Activated T-helper 2 cell treated with anti-CD3 and anti-CD28 coated beads, Interferon-gamma antibody, Interleukin-2, Interleukin-4, amounts not matched to agents 10 μg/mL and 5 μg/mL and 100 μg/mL, durations not matched to agents 14 hours and 24 hours and 36 hours (primary cell): ENCODE measurements at regions of chr1 and their contacts with region 1.

Region 1: DNA sequence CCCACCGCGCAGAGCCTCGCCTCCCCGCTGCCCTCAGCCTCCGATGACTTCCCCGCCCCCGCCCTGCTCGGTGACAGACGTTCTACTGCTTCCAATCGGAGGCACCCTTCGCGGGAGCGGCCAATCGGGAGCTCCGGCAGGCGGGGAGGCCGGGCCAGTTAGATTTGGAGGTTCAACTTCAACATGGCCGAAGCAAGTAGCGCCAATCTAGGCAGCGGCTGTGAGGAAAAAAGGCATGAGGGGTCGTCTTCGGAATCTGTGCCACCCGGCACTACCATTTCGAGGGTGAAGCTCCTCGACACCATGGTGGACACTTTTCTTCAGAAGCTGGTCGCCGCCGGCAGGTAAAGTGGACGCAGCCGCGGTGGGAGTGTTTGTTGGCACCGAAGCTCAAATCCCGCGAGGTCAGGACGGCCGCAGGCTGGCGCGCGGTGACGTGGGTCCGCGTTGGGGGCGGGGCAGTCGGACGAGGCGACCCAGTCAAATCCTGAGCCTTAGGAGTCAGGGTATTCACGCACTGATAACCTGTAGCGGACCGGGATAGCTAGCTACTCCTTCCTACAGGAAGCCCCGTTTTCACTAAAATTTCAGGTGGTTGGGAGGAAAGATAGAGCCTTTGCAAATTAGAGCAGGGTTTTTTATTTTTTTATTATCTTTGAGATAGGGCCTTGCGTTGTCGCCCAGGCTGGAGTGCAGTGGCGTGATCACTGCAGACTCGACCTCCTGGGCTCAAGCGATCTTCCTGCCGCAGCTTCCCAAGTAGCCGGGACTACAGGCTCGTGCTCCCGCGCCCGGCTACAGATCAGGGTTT is at the start of gene PMF1:
- DNase-seq: peak; percentile 95
- H3K4me3 Mint-ChIP-seq: peak within 1 kb of the TSS; percentile 93
- H3K27ac Mint-ChIP-seq: peak within 1 kb of the TSS; percentile 98
- H3K4me1 Mint-ChIP-seq: peaks cover 31% of the 10 kb centered on the region
- H3K27me3 Mint-ChIP-seq: no peaks in the 10 kb centered on the region
- total RNA-seq, gene PMF1: 115 and 117 TPM in 2 replicates

Region 2: GRCh38 chr1:156198831-156199349 is 14.1 kb before region 1 on chr1:
- intact Hi-C with region 1: loop called (anchors 1 kb)
- DNase-seq: no peak
- H3K4me3 Mint-ChIP-seq: peak overlapping the region; percentile 76
- H3K27ac Mint-ChIP-seq: peak overlapping the region; percentile 95
- H3K4me1 Mint-ChIP-seq: peaks cover 55% of the 10 kb centered on the region
- H3K27me3 Mint-ChIP-seq: no peaks in the 10 kb centered on the region

Region 3: DNA sequence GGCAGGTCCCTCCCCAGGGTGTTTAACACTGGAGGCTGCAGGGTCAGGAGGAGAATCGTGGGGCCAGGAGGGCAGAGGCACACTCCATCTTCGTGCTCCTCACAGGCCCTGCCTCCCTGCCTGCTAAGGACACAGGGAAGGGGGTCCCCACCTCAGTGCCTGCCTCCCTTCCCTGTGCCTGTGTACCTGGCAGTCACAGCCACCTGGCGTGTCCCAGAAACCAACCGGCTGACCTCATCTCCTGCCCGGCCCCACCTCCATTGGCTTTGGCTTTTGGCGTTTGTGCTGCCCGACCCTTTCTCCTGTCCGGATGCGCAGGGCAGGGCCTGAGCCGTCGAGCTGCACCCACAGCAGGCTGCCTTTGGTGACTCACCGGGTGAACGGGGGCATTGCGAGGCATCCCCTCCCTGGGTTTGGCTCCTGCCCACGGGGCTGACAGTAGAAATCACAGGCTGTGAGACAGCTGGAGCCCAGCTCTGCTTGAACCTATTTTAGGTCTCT is 28.3 kb after region 1 on chr1:
- intact Hi-C with region 1: no loop called
- DNase-seq: no peak
- H3K4me3 Mint-ChIP-seq: no peak overlapping the region
- H3K27ac Mint-ChIP-seq: no peak overlapping the region
- H3K4me1 Mint-ChIP-seq: peaks cover 17% of the 10 kb centered on the region
- H3K27me3 Mint-ChIP-seq: no peaks in the 10 kb centered on the region